Activated CD4-positive, alpha-beta T cell treated with anti-CD3 and anti-CD28 coated beads for 36 hours (primary cell): ENCODE measurements at regions of chr6 and their contacts with region 1.

Region 1: DNA sequence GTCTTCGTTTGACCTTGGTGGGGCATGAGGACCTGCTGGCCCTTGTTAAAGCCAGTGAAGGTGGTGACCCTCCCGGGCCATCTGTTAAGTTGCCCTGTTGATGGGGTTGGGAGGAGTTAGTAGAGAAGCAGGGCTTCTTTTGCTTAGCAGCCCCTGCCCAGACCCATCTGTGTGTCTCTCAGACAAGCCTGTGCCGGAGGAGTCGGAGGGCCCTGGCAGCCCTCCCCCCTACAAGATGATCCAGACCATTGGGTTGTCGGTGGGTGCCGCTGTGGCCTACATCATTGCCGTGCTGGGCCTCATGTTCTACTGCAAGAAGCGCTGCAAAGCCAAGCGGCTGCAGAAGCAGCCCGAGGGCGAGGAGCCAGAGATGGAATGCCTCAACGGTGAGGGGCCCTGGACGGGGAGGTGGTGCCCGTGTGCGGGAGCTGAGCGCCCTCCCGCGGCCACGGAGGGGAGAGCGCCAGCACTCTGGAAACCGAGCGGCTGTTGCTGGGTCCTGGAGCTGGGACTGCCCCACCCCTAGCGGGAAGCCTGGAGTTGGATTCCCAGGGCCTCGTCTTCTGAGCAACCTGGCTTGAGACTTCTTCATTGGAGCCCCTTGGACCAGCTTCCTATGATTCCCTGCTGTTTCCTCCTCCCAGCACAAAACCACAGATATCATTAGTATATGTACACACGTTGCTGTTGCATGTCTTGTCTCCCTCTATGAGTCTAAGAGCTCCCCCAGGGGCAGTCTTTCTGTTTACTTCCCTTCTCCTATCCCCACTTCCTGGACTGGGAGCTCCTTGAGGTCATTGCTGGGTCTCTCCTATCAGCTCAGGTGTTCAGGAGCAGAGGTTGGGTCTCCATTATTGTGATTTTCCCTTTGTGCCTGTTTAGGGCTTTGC is 27.6 kb upstream of the SRF start:
- DNase-seq: peak; percentile 90
- ATAC-seq: peak; percentile 99
- H3K4me3 Mint-ChIP-seq: no peak overlapping the region
- H3K27ac Mint-ChIP-seq: no peak overlapping the region
- H3K4me1 Mint-ChIP-seq: peaks cover 5% of the 10 kb centered on the region
- H3K27me3 Mint-ChIP-seq: no peaks in the 10 kb centered on the region

Region 2: GRCh38 chr6:42963855-42964605 is 179.4 kb before region 1 on chr6:
- CTCF ChIA-PET with region 1: interaction called, 5 read pairs
- POLR2A ChIA-PET with region 1: no interaction called
- intact Hi-C with region 1: loop called (anchors 2 to 10 kb)
- DNase-seq: peak; percentile 68
- ATAC-seq: peak; percentile 83
- H3K4me3 Mint-ChIP-seq: no peak overlapping the region
- H3K27ac Mint-ChIP-seq: no peak overlapping the region
- H3K4me1 Mint-ChIP-seq: peaks cover 11% of the 10 kb centered on the region
- H3K27me3 Mint-ChIP-seq: no peaks in the 10 kb centered on the region

Region 3: DNA sequence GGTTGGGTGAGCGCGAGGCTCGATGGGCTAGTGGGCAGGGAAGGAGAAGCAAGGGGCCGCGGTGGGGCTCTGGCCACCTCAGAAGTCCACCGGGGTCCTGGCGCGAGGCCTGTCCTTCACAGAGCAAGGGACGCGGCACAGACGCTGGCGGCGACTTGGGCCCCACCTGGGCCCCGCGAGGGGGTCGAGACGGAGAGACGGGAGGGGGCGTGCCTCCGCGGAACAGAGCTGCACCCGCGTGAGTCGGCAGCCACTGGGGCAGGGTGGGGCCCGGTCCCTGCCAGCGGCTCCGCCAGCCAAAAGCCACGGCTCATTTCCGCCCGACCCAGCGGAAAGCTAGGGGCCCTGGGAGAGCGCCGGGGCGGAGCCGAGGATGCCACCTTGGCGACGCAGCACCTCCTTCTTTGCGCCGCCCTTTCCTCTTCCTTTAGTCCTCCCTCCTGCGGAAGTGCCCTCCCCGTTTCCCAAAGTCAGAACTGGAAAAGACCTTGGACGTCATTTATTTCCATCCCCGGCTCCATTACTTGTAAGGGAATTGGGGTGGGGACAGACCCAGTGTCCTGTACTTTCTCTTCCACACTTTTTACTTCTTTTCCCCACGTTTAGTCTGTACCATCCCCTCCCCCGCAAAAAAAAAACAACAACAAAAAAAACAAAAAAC is 89.8 kb before region 1 on chr6 and contains the start of gene CUL7:
- CTCF ChIA-PET with region 1: interaction called, 5 read pairs
- POLR2A ChIA-PET with region 1: no interaction called
- intact Hi-C with region 1: loop called in 1 of 2 experiments (anchors 1 kb)
- DNase-seq: peak; percentile 96
- ATAC-seq: peak; percentile 99
- H3K4me3 Mint-ChIP-seq: peak within 1 kb of the TSS; percentile 99
- H3K27ac Mint-ChIP-seq: peak within 1 kb of the TSS; percentile 97
- H3K4me1 Mint-ChIP-seq: peaks cover 43% of the 10 kb centered on the region
- H3K27me3 Mint-ChIP-seq: no peaks in the 10 kb centered on the region
- total RNA-seq, gene CUL7: 16.3 to 18.0 TPM

Region 4: DNA sequence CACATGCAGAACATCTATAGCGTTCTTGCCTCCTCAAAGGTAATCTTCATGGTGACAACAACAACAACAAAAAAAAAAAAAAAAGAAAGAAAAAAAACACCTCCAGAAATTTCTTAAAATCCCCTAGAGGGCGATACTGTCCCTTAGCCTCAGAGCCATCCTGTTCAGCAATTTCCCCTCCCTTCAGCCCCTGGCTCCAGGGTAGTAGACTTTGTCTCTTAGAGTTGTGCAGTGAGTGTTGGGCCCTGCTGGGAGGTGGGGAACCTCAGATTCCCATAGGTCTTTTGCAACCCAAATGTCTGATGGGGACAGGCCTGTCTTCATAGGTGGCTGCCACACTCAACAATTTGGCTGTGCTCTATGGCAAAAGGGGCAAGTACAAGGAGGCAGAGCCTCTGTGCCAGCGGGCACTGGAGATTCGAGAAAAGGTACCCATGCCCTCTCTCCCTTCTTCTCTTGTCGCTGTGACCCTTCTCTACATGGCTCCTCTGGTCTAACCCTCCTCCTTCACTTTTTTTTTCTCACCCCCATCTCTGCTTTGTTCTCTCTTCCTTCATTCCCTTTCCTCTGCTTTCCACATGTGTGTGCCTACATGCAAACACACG is 73.3 kb before region 1 on chr6:
- CTCF ChIA-PET with region 1: interaction called, 4 read pairs
- POLR2A ChIA-PET with region 1: no interaction called
- intact Hi-C with region 1: loop called (anchors 1 to 2 kb)
- DNase-seq: peak; percentile 47
- ATAC-seq: peak; percentile 85
- H3K4me3 Mint-ChIP-seq: no peak overlapping the region
- H3K27ac Mint-ChIP-seq: no peak overlapping the region
- H3K4me1 Mint-ChIP-seq: no peaks in the 10 kb centered on the region
- H3K27me3 Mint-ChIP-seq: no peaks in the 10 kb centered on the region

Region 5: GRCh38 chr6:43075670-43076463 is 67.6 kb before region 1 on chr6 and contains the start of gene PTK7:
- CTCF ChIA-PET with region 1: interaction called, 10 read pairs
- POLR2A ChIA-PET with region 1: no interaction called
- intact Hi-C with region 1: loop called in 1 of 2 experiments (anchors 2 kb)
- DNase-seq: peak; percentile 71
- ATAC-seq: peak; percentile 85
- H3K4me3 Mint-ChIP-seq: peak within 1 kb of the TSS; percentile 65
- H3K27ac Mint-ChIP-seq: no peak within 1 kb of the TSS
- H3K4me1 Mint-ChIP-seq: peaks cover 7% of the 10 kb centered on the region
- H3K27me3 Mint-ChIP-seq: peaks cover 9% of the 10 kb centered on the region
- total RNA-seq, gene PTK7: 4.1 to 4.6 TPM

Region 6: GRCh38 chr6:43159599-43159998 is 16.1 kb after region 1 on chr6:
- CTCF ChIA-PET with region 1: interaction called, 13 read pairs
- POLR2A ChIA-PET with region 1: no interaction called
- intact Hi-C with region 1: no loop called
- DNase-seq: no peak
- ATAC-seq: no peak
- H3K4me3 Mint-ChIP-seq: no peak overlapping the region
- H3K27ac Mint-ChIP-seq: no peak overlapping the region
- H3K4me1 Mint-ChIP-seq: no peaks in the 10 kb centered on the region
- H3K27me3 Mint-ChIP-seq: no peaks in the 10 kb centered on the region

Region 7: GRCh38 chr6:43334466-43335095 is 191.1 kb after region 1 on chr6:
- CTCF ChIA-PET with region 1: no interaction called
- POLR2A ChIA-PET with region 1: no interaction called
- intact Hi-C with region 1: no loop called
- DNase-seq: no peak
- ATAC-seq: no peak
- H3K4me3 Mint-ChIP-seq: no peak overlapping the region
- H3K27ac Mint-ChIP-seq: no peak overlapping the region
- H3K4me1 Mint-ChIP-seq: peaks cover 25% of the 10 kb centered on the region
- H3K27me3 Mint-ChIP-seq: no peaks in the 10 kb centered on the region